ENCODE measurements at regions of chr5 and their contacts with region 1.

Region 1: DNA sequence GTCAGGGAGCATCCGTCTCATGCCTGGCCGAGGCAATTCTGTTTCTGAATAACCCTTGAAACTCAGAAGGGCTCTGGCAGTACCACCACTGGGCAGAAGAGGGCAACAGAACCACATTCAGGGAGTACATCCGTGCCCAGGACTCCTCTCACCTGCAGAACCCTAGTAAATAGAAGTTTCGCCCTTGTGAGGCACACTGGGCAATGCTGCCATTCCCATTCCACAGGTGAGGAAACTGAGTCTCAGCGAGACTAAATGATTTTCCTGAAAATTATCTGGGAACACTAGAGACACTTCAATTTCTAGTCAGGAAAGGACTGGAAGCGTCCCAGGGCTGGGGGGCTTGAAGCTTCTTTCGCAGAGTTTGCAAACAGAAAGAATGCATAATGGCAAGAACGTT is 74.7 kb downstream of the FGF1 start:
- DNase-seq: peak; percentile 85
- H3K4me3 Mint-ChIP-seq: no peak overlapping the region
- H3K27ac Mint-ChIP-seq: no peak overlapping the region
- H3K4me1 Mint-ChIP-seq: no peaks in the 10 kb centered on the region
- H3K27me3 Mint-ChIP-seq: peaks cover 15% of the 10 kb centered on the region

Region 2: GRCh38 chr5:142000703-142001484 is 610.3 kb before region 1 on chr5:
- CTCF ChIA-PET with region 1: no interaction called
- POLR2A ChIA-PET with region 1: no interaction called
- intact Hi-C with region 1: loop called (anchors 10 kb)
- DNase-seq: peak; percentile 43
- H3K4me3 Mint-ChIP-seq: no peak overlapping the region
- H3K27ac Mint-ChIP-seq: peak overlapping the region; percentile 84
- H3K4me1 Mint-ChIP-seq: peaks cover 21% of the 10 kb centered on the region
- H3K27me3 Mint-ChIP-seq: no peaks in the 10 kb centered on the region

Measured in activated CD4-positive, alpha-beta memory T cell treated with anti-CD3 and anti-CD28 coated beads for 36 hours (primary cell).